Activated CD4-positive, alpha-beta T cell treated with anti-CD3 and anti-CD28 coated beads for 36 hours (primary cell): ENCODE measurements at regions of chr1 and their contacts with region 1.

Region 1: GRCh38 chr1:58652651-58653184 is 47.1 kb downstream of the MYSM1 start:
- DNase-seq: peak; percentile 73
- ATAC-seq: peak; percentile 93
- H3K4me3 Mint-ChIP-seq: no peak overlapping the region
- H3K27ac Mint-ChIP-seq: no peak overlapping the region
- H3K4me1 Mint-ChIP-seq: peaks cover 12% of the 10 kb centered on the region
- H3K27me3 Mint-ChIP-seq: no peaks in the 10 kb centered on the region

Region 2: GRCh38 chr1:56831871-56832693 is 1820.6 kb before region 1 on chr1:
- CTCF ChIA-PET with region 1: no interaction called
- POLR2A ChIA-PET with region 1: no interaction called
- intact Hi-C with region 1: loop called in 1 of 2 experiments (anchors 5 kb)
- DNase-seq: peak; percentile 80
- ATAC-seq: peak; percentile 60
- H3K4me3 Mint-ChIP-seq: no peak overlapping the region
- H3K27ac Mint-ChIP-seq: no peak overlapping the region
- H3K4me1 Mint-ChIP-seq: peaks cover 3% of the 10 kb centered on the region
- H3K27me3 Mint-ChIP-seq: peaks cover 6% of the 10 kb centered on the region

Region 3: GRCh38 chr1:58432851-58433668 is 219.7 kb before region 1 on chr1:
- CTCF ChIA-PET with region 1: no interaction called
- POLR2A ChIA-PET with region 1: no interaction called
- intact Hi-C with region 1: no loop called
- DNase-seq: no peak
- ATAC-seq: no peak
- H3K4me3 Mint-ChIP-seq: no peak overlapping the region
- H3K27ac Mint-ChIP-seq: no peak overlapping the region
- H3K4me1 Mint-ChIP-seq: no peaks in the 10 kb centered on the region
- H3K27me3 Mint-ChIP-seq: no peaks in the 10 kb centered on the region

Region 4: GRCh38 chr1:58524353-58524945 is 128.3 kb before region 1 on chr1:
- CTCF ChIA-PET with region 1: interaction called, 97 read pairs
- POLR2A ChIA-PET with region 1: no interaction called
- intact Hi-C with region 1: no loop called
- DNase-seq: peak; percentile 45
- ATAC-seq: peak; percentile 78
- H3K4me3 Mint-ChIP-seq: no peak overlapping the region
- H3K27ac Mint-ChIP-seq: peak overlapping the region; percentile 31
- H3K4me1 Mint-ChIP-seq: peaks cover 23% of the 10 kb centered on the region
- H3K27me3 Mint-ChIP-seq: no peaks in the 10 kb centered on the region

Region 5: DNA sequence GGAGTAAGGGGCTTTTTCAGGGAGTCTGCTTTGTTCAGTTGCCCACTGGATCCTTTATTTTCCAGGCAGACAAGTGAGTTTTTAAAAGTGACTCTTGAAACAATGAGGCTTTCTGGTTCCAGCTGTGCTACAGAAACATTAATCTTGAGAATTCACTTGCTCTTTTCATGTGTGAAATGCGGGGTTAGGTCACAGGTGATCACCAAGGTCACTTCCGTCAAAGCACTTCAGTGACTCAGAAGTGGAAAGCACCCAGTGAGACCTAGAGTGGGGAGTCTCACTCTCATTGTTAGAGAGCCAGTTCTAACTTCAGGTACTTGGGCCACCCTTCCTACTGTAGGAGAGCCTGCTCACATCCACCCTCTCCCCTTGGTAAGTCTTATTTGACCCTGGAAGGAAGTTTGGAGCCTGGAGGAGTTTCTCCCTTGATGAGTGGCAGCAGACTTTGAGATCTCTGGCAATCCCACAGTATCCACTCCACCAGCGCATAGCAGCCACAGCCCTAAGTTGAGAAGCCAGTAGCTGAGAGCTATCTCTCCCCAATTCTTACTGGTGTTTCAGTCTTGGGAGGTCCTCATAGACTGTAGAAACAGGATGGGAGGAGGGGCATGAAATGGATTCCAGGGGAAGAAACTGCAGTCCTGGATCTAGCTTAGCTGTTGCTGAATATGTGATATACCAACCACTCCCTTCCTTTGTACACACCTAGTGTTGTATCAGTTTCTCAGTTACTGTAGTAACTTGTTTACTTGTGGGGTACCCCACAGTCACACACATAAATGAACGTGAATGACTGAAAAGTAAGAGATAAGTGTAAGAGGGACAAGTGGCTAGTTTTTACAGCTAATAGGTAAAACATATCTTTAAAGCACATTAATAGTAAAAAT is 78.8 kb before region 1 on chr1:
- CTCF ChIA-PET with region 1: interaction called, 3 read pairs
- POLR2A ChIA-PET with region 1: no interaction called
- intact Hi-C with region 1: loop called in 1 of 2 experiments (anchors 5 kb)
- DNase-seq: peak; percentile 70
- ATAC-seq: peak; percentile 97
- H3K4me3 Mint-ChIP-seq: no peak overlapping the region
- H3K27ac Mint-ChIP-seq: no peak overlapping the region
- H3K4me1 Mint-ChIP-seq: peaks cover 38% of the 10 kb centered on the region
- H3K27me3 Mint-ChIP-seq: peaks cover 65% of the 10 kb centered on the region

Region 6: GRCh38 chr1:58664881-58665280 is 12.2 kb after region 1 on chr1:
- CTCF ChIA-PET with region 1: interaction called, 15 read pairs
- POLR2A ChIA-PET with region 1: interaction called, 4 read pairs
- intact Hi-C with region 1: no loop called
- DNase-seq: no peak
- ATAC-seq: no peak
- H3K4me3 Mint-ChIP-seq: no peak overlapping the region
- H3K27ac Mint-ChIP-seq: no peak overlapping the region
- H3K4me1 Mint-ChIP-seq: no peaks in the 10 kb centered on the region
- H3K27me3 Mint-ChIP-seq: no peaks in the 10 kb centered on the region

Region 7: DNA sequence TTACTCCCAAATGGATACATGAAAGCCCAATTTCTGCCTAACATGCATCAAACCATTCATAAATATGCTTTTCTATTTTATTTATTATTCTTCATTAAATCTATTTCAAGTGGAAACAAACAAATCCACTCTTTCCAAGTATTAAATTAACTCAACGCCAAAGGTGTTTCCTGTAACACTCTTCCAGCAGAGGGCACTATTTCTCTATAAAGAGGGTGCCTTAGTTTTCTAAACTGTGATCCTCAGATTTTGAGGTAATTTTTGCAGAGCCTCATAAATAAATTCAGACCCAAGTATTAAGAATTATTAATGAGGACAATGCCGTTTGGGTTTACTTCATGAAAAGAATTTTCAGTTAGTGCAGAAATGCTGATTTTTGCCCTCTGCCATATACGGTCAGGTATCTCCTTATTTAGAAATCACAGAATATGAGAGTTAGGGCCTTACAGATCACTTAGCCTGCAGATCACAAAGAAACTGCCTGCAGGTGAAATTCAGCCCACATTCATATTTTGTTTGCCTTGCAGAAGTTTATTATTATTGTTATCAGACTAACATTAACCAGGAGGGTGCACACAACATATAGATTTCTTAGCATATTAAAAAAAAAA is 87.2 kb after region 1 on chr1:
- CTCF ChIA-PET with region 1: no interaction called
- POLR2A ChIA-PET with region 1: no interaction called
- intact Hi-C with region 1: no loop called
- DNase-seq: no peak
- ATAC-seq: peak; percentile 44
- H3K4me3 Mint-ChIP-seq: no peak overlapping the region
- H3K27ac Mint-ChIP-seq: no peak overlapping the region
- H3K4me1 Mint-ChIP-seq: no peaks in the 10 kb centered on the region
- H3K27me3 Mint-ChIP-seq: peaks cover 2% of the 10 kb centered on the region

Region 8: GRCh38 chr1:58783993-58784757 is 131.5 kb after region 1 on chr1 and contains the start of gene JUN:
- CTCF ChIA-PET with region 1: no interaction called
- POLR2A ChIA-PET with region 1: no interaction called
- intact Hi-C with region 1: no loop called
- DNase-seq: peak; percentile 99
- ATAC-seq: peak; percentile 88
- H3K4me3 Mint-ChIP-seq: peak within 1 kb of the TSS; percentile 79
- H3K27ac Mint-ChIP-seq: peak within 1 kb of the TSS; percentile 91
- H3K4me1 Mint-ChIP-seq: peaks cover 17% of the 10 kb centered on the region
- H3K27me3 Mint-ChIP-seq: no peaks in the 10 kb centered on the region
- total RNA-seq, gene JUN: 24.2 to 25.5 TPM

Region 9: DNA sequence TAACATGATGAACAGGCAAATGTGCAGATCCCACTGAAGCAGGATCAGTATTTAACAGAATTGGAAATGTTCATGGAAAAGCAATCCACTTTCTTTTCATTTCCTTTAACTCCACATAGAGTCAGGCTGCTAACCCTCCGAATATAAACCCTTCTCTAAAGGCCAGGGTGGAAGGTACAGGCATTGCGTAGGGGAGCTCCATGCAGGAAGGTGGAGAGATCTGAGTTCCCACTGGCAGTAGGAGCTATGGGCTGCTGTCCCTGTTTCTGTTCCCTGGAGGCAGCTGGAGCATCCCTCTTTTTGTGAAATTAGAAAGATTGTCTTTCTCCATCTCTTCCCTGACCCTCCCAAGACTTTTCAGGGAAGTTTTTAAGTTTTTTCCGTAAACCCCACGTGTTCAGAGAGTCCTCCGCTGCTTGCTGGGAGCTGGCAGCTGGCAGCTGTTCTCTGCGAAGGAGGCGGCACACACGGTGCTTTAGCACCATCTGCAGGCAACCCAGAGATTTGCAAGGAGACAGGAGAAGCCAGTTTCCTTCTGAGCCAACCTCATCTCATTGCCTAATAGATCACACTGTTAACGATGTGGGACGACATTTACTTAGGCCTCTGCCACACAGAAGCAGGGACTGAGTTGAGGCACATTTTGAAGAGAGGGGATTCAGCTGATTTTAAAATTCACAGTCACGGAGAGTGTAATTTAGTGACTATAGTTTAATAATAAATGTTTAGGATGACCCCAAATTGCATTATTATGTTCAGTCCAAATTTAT is 1106.6 kb after region 1 on chr1:
- CTCF ChIA-PET with region 1: interaction called, 6 read pairs
- POLR2A ChIA-PET with region 1: no interaction called
- intact Hi-C with region 1: loop called in 1 of 2 experiments (anchors 2 kb)
- DNase-seq: peak; percentile 84
- ATAC-seq: peak; percentile 98
- H3K4me3 Mint-ChIP-seq: peak overlapping the region; percentile 16
- H3K27ac Mint-ChIP-seq: no peak overlapping the region
- H3K4me1 Mint-ChIP-seq: no peaks in the 10 kb centered on the region
- H3K27me3 Mint-ChIP-seq: no peaks in the 10 kb centered on the region